Natural killer cell (primary cell): ENCODE measurements at regions of chr17 and their contacts with region 1.

Region 1: GRCh38 chr17:41278176-41278955 is 2.9 kb downstream of the KRTAP9-7 start:
- DNase-seq: peak in 1 of 2 donors; percentile 0
- ATAC-seq: no peak
- H3K4me3 ChIP-seq: no peak overlapping the region
- H3K4me3 Mint-ChIP-seq: no peak overlapping the region
- H3K27ac ChIP-seq: no peak overlapping the region
- H3K27ac Mint-ChIP-seq: no peak overlapping the region
- H3K4me1 ChIP-seq: no peaks in the 10 kb centered on the region
- H3K4me1 Mint-ChIP-seq: no peaks in the 10 kb centered on the region
- H3K27me3 ChIP-seq: peaks cover 4% of the 10 kb centered on the region
- H3K27me3 Mint-ChIP-seq: peaks cover 20 to 54% of the 10 kb centered on the region in 2 donors
- CTCF ChIP-seq: no peak

Region 2: GRCh38 chr17:41140360-41141132 is 137.8 kb before region 1 on chr17 and contains the start of gene KRTAP4-6:
- intact Hi-C with region 1: no loop called
- DNase-seq: no peak
- ATAC-seq: no peak
- H3K4me3 ChIP-seq: no peak within 1 kb of the TSS
- H3K4me3 Mint-ChIP-seq: no peak within 1 kb of the TSS
- H3K27ac ChIP-seq: no peak within 1 kb of the TSS
- H3K27ac Mint-ChIP-seq: no peak within 1 kb of the TSS
- H3K4me1 ChIP-seq: no peaks in the 10 kb centered on the region
- H3K4me1 Mint-ChIP-seq: no peaks in the 10 kb centered on the region
- H3K27me3 ChIP-seq: no peaks in the 10 kb centered on the region
- H3K27me3 Mint-ChIP-seq: peaks cover 18 to 22% of the 10 kb centered on the region in 2 donors
- CTCF ChIP-seq: no peak
- total RNA-seq, gene KRTAP4-6: not detected

Region 3: GRCh38 chr17:41199421-41200078 is 78.8 kb before region 1 on chr17:
- intact Hi-C with region 1: no loop called
- DNase-seq: no peak
- ATAC-seq: no peak
- H3K4me3 ChIP-seq: no peak overlapping the region
- H3K4me3 Mint-ChIP-seq: no peak overlapping the region
- H3K27ac ChIP-seq: no peak overlapping the region
- H3K27ac Mint-ChIP-seq: no peak overlapping the region
- H3K4me1 ChIP-seq: no peaks in the 10 kb centered on the region
- H3K4me1 Mint-ChIP-seq: no peaks in the 10 kb centered on the region
- H3K27me3 ChIP-seq: peaks cover 2% of the 10 kb centered on the region
- H3K27me3 Mint-ChIP-seq: peaks cover 11 to 27% of the 10 kb centered on the region in 2 donors
- CTCF ChIP-seq: no peak

Region 4: GRCh38 chr17:41264599-41264998 is 13.8 kb before region 1 on chr17:
- intact Hi-C with region 1: loop called (anchors 1 kb)
- DNase-seq: peak in 1 of 2 donors; percentile 1
- ATAC-seq: no peak
- H3K4me3 ChIP-seq: no peak overlapping the region
- H3K4me3 Mint-ChIP-seq: no peak overlapping the region
- H3K27ac ChIP-seq: no peak overlapping the region
- H3K27ac Mint-ChIP-seq: no peak overlapping the region
- H3K4me1 ChIP-seq: no peaks in the 10 kb centered on the region
- H3K4me1 Mint-ChIP-seq: no peaks in the 10 kb centered on the region
- H3K27me3 ChIP-seq: peaks cover 2% of the 10 kb centered on the region
- H3K27me3 Mint-ChIP-seq: peaks cover 45 to 47% of the 10 kb centered on the region in 2 donors
- CTCF ChIP-seq: no peak